ENCODE measurements at regions of chr1 and their contacts with region 1.

Region 1: GRCh38 chr1:179142889-179143299 is 61.0 kb downstream of the TOR3A start:
- DNase-seq: no peak
- ATAC-seq: peak; percentile 23 to 40 (median 30)
- H3K4me3 ChIP-seq: no peak overlapping the region
- H3K4me3 Mint-ChIP-seq: peak overlapping the region in 1 of 3 donors; percentile 32
- H3K27ac ChIP-seq: no peak overlapping the region
- H3K27ac Mint-ChIP-seq: peak overlapping the region; percentile 29 to 77
- H3K4me1 ChIP-seq: peaks cover 18 to 33% of the 10 kb centered on the region in 2 experiments
- H3K4me1 Mint-ChIP-seq: peaks cover 42 to 50% (median 50%) of the 10 kb centered on the region in 3 donors
- H3K27me3 ChIP-seq: no peaks in the 10 kb centered on the region
- H3K27me3 Mint-ChIP-seq: no peaks in the 10 kb centered on the region

Region 2: DNA sequence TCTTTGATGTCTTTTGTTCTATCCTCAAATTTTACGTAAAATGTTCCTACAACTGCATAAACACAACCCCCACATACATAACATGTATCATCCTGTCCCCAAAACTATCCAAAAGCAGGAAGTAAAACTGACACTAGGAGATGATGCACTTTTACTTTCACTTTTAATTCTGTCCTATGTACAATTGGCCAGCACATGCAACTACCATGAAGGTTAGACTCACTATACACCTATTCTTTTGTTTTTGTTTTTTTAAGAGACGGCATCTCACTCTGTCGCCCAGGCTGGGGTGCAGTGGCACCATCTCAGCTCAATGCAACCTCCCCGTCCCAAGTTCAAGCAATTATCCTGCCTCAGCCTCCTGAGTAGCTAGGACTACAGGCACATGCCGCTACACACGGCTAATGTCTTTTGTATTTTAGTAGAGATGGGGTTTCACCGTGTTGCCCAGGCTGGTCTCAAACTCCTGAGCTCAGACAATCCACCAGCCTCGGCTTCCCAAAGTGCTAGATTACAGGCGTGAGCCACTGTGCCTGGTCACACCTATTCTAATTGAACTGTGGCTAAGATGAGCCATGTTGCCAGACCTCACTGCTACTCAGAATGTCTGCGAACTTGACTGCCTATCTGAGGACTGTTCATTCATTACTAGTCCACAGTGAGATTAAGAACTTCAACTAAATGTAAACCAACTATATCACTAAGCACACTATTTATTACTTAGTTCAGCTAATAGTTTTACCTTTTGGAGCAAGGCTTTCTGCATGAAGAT is 13.0 kb before region 1 on chr1:
- CTCF ChIA-PET with region 1: interaction called, 3 to 11 read pairs
- POLR2A ChIA-PET with region 1: interaction called in 1 of 2 experiments, 5 read pairs
- DNase-seq: peak in 26 of 35 experiments; percentile 2 to 76 (median 18)
- ATAC-seq: peak; percentile 92 to 97 (median 96)
- H3K4me3 ChIP-seq: peak overlapping the region in 1 of 2 donors; percentile 49
- H3K4me3 Mint-ChIP-seq: peak overlapping the region; percentile 51 to 77 (median 62)
- H3K27ac ChIP-seq: peak overlapping the region; percentile 94
- H3K27ac Mint-ChIP-seq: peak overlapping the region; percentile 91 to 92
- H3K4me1 ChIP-seq: peaks cover 6 to 15% of the 10 kb centered on the region in 2 experiments
- H3K4me1 Mint-ChIP-seq: peaks cover 16 to 23% (median 20%) of the 10 kb centered on the region in 3 donors
- H3K27me3 ChIP-seq: no peaks in the 10 kb centered on the region
- H3K27me3 Mint-ChIP-seq: no peaks in the 10 kb centered on the region

Measured in T-cell (primary cell).